Posterior vena cava (tissue), 2 donors: ENCODE measurements at regions of chr20 and their contacts with region 1.

Region 1: DNA sequence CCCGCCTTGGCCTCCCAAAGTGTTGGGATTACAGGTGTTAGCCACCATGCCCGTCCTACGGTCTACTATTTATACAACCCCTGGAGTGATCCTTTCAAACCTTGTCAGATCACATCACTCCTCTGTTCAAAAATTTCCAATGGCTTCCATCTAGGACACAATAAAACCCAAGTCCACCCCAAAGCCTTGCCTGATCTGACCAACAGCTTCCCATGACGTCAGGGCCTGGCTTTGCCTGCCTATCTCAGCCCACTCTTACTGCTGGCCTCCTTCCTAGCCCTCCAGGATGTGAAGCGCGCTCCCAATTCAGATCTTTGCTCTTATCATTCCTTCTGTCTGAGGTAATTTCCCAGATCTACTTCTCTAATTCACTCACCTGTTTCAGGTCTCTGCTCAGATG is 128.4 kb downstream of the LINC00237 start:
- DNase-seq: no peak

Region 2: GRCh38 chr20:20875716-20876115 is 102.1 kb before region 1 on chr20:
- intact Hi-C with region 1: no loop called
- DNase-seq: no peak

Region 3: DNA sequence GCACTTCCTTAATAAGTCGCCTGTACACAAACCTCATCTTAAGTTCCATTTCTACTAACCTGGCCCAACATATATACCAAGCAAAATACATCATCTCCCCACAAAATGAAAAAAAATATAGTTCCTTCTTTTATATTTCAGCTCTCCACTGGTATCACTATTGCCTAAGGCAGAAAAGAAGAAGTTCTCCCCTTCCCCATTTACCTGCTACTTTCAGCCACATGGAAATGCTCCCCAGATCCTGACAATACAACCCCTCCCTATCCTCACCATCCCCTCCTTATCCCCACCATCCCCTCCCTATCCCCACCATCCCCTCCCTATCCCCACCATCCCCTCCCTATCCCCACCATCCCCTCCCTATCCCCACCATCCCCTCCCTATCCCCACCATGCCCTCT is 47.3 kb before region 1 on chr20:
- intact Hi-C with region 1: loop called in 1 of 2 experiments (anchors 1 kb)
- DNase-seq: no peak